ENCODE measurements at regions of chr2 and their contacts with region 1.

Region 1: DNA sequence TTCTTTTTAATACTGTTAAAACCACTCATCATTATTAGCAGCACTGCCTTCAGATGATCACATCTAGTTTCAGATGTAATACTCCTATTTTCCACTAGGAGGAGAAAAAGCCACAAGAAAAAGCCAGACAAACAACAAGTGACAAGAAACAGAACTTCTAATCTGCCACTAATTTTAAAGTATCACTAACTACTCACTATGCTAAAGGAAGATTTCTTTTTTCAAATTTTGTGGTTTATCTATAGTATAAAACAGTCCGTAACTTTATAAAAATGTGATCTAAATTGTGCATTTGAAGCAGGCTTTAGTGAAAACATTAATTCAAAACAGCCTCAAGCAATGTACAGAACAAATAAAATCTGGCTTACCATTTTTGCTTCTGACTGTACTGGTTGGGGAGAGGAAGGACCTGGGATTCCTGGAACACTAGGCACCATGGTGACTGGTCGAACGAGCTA is 56.8 kb downstream of the ATF2 start:
- DNase-seq: peak in 6 of 9 donors; percentile 23 to 59 (median 48)
- ATAC-seq: peak; percentile 67
- H3K4me3 ChIP-seq: no peak overlapping the region
- H3K4me3 Mint-ChIP-seq: no peak overlapping the region
- H3K27ac ChIP-seq: no peak overlapping the region
- H3K27ac Mint-ChIP-seq: peak overlapping the region in 7 of 9 donors; percentile 7 to 74 (median 39)
- H3K4me1 ChIP-seq: no peaks in the 10 kb centered on the region
- H3K4me1 Mint-ChIP-seq: peaks cover 0 to 9% (median 4%) of the 10 kb centered on the region in 7 donors
- H3K27me3 ChIP-seq: no peaks in the 10 kb centered on the region
- H3K27me3 Mint-ChIP-seq: no peaks in the 10 kb centered on the region

Region 2: GRCh38 chr2:174951745-174952144 is 159.5 kb before region 1 on chr2:
- CTCF ChIA-PET with region 1: no interaction called
- POLR2A ChIA-PET with region 1: no interaction called
- intact Hi-C with region 1: no loop called
- DNase-seq: no peak
- ATAC-seq: no peak
- H3K4me3 ChIP-seq: no peak overlapping the region
- H3K4me3 Mint-ChIP-seq: no peak overlapping the region
- H3K27ac ChIP-seq: no peak overlapping the region
- H3K27ac Mint-ChIP-seq: no peak overlapping the region
- H3K4me1 ChIP-seq: no peaks in the 10 kb centered on the region
- H3K4me1 Mint-ChIP-seq: no peaks in the 10 kb centered on the region
- H3K27me3 ChIP-seq: no peaks in the 10 kb centered on the region
- H3K27me3 Mint-ChIP-seq: peaks cover 6 to 33% (median 11%) of the 10 kb centered on the region in 5 donors

Region 3: DNA sequence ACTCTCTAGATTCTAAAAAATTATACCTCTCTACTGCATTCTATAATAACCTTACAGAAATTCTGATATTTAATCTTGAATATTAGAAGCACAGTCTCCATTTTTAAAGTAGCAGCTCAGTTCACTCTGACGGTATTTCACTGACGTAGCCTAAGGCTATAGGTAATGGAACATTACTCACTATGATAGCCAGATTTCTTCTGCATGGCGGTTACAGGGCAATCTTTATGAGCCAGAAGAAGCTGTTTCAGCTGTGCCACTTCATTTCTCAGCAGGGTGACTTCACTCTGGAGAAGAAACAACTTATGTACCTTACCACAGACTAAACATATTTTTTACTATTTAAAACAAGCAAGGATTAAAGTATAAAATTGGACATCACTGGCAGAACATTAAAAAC is 30.8 kb before region 1 on chr2:
- CTCF ChIA-PET with region 1: no interaction called
- POLR2A ChIA-PET with region 1: no interaction called
- intact Hi-C with region 1: no loop called
- DNase-seq: no peak
- ATAC-seq: no peak
- H3K4me3 ChIP-seq: no peak overlapping the region
- H3K4me3 Mint-ChIP-seq: no peak overlapping the region
- H3K27ac ChIP-seq: no peak overlapping the region
- H3K27ac Mint-ChIP-seq: no peak overlapping the region
- H3K4me1 ChIP-seq: no peaks in the 10 kb centered on the region
- H3K4me1 Mint-ChIP-seq: peaks cover 0 to 4% (median 0%) of the 10 kb centered on the region in 7 donors
- H3K27me3 ChIP-seq: no peaks in the 10 kb centered on the region
- H3K27me3 Mint-ChIP-seq: no peaks in the 10 kb centered on the region

Region 4: GRCh38 chr2:175154661-175155082 is 43.4 kb after region 1 on chr2:
- CTCF ChIA-PET with region 1: no interaction called
- POLR2A ChIA-PET with region 1: interaction called, 4 read pairs
- intact Hi-C with region 1: loop called in 1 of 2 experiments (anchors 5 kb)
- DNase-seq: no peak
- ATAC-seq: no peak
- H3K4me3 ChIP-seq: no peak overlapping the region
- H3K4me3 Mint-ChIP-seq: peak overlapping the region in 1 of 10 donors; percentile 65
- H3K27ac ChIP-seq: no peak overlapping the region
- H3K27ac Mint-ChIP-seq: peak overlapping the region in 2 of 9 donors; percentile 28 to 86
- H3K4me1 ChIP-seq: peaks cover 4 to 5% of the 10 kb centered on the region in 2 donors
- H3K4me1 Mint-ChIP-seq: peaks cover 17 to 71% (median 55%) of the 10 kb centered on the region in 7 donors
- H3K27me3 ChIP-seq: no peaks in the 10 kb centered on the region
- H3K27me3 Mint-ChIP-seq: no peaks in the 10 kb centered on the region

Region 5: DNA sequence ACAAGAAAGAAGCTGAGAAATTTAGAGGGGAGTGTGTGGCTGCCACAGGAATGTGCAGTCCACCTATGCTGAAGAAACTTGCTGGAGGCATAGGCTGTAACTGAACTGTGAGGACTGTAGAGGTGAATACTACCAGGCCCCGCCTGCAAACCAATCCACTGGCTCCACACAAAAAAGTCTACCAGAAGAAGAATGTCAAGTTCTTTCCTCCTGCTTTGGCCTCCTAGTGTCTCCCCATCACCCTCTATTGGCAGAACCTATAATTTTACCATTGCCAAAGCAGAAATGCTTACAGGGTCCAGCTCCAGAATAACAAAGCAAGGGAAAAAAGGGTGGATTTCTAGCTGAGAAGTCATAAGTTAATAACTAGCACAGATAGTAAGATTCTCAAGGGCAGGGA is 76.1 kb after region 1 on chr2:
- CTCF ChIA-PET with region 1: no interaction called
- POLR2A ChIA-PET with region 1: interaction called, 3 read pairs
- intact Hi-C with region 1: loop called in 1 of 2 experiments (anchors 1 kb)
- DNase-seq: peak in 5 of 9 donors; percentile 11 to 42 (median 22)
- ATAC-seq: peak; percentile 53
- H3K4me3 ChIP-seq: no peak overlapping the region
- H3K4me3 Mint-ChIP-seq: no peak overlapping the region
- H3K27ac ChIP-seq: no peak overlapping the region
- H3K27ac Mint-ChIP-seq: no peak overlapping the region
- H3K4me1 ChIP-seq: no peaks in the 10 kb centered on the region
- H3K4me1 Mint-ChIP-seq: peaks cover 0 to 3% (median 0%) of the 10 kb centered on the region in 7 donors
- H3K27me3 ChIP-seq: no peaks in the 10 kb centered on the region
- H3K27me3 Mint-ChIP-seq: peaks cover 12 to 29% (median 19%) of the 10 kb centered on the region in 5 donors

Region 6: DNA sequence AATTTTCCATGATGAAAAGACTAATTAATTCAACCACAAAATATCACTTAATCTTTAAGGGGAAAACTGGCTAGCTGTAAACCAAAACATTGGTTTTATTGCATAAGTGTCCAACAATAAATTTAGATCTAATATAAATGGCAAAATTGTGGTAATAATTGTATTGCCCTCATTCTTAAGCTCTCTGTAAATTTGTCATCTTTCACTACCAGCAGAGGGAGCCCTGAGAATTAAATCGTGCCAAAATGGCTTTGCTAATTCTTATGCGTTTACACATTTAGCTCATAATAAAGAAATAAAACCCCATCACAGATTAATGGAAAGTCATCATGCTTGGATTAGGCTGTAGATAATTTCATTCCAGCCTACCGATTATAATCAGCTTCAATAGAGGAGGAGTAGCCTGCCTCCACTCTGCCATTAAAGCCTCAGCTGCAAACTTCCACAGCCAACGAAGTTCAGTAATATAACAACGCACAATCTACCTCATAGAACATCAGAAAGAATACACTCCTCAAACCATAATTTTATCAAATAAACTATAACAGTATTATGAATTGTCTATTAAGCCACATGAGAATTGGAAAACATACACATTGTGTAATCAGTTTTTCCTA is 140.3 kb after region 1 on chr2:
- CTCF ChIA-PET with region 1: no interaction called
- POLR2A ChIA-PET with region 1: no interaction called
- intact Hi-C with region 1: loop called in 1 of 2 experiments (anchors 1 kb)
- DNase-seq: peak in 5 of 9 donors; percentile 8 to 19 (median 10)
- ATAC-seq: no peak
- H3K4me3 ChIP-seq: no peak overlapping the region
- H3K4me3 Mint-ChIP-seq: no peak overlapping the region
- H3K27ac ChIP-seq: no peak overlapping the region
- H3K27ac Mint-ChIP-seq: no peak overlapping the region
- H3K4me1 ChIP-seq: no peaks in the 10 kb centered on the region
- H3K4me1 Mint-ChIP-seq: peaks cover 0 to 6% (median 0%) of the 10 kb centered on the region in 7 donors
- H3K27me3 ChIP-seq: no peaks in the 10 kb centered on the region
- H3K27me3 Mint-ChIP-seq: peaks cover 32 to 48% (median 42%) of the 10 kb centered on the region in 5 donors

Region 7: DNA sequence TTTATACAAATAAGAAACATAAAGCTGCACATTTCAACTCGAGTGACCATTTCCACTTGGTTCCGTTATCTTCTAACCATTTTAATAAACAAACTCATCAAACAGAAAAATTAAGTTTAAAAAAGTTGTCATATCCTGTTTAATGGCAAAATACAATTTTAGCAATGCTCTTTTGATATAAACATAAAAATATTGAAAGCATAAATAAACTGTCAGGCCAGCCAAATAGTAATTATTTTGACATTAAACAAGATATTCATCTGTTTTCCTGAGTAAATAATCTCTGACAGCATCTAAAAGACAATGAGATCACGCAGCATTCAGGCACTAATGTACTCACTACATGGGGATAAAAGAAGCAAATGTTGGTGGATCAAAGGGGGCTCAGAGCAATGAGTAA is 215.6 kb after region 1 on chr2:
- CTCF ChIA-PET with region 1: no interaction called
- POLR2A ChIA-PET with region 1: no interaction called
- intact Hi-C with region 1: loop called in 1 of 2 experiments (anchors 1 kb)
- DNase-seq: no peak
- ATAC-seq: no peak
- H3K4me3 ChIP-seq: no peak overlapping the region
- H3K4me3 Mint-ChIP-seq: no peak overlapping the region
- H3K27ac ChIP-seq: no peak overlapping the region
- H3K27ac Mint-ChIP-seq: no peak overlapping the region
- H3K4me1 ChIP-seq: no peaks in the 10 kb centered on the region
- H3K4me1 Mint-ChIP-seq: no peaks in the 10 kb centered on the region
- H3K27me3 ChIP-seq: peaks cover 0 to 2% of the 10 kb centered on the region in 2 donors
- H3K27me3 Mint-ChIP-seq: peaks cover 0 to 16% (median 4%) of the 10 kb centered on the region in 5 donors